ENCODE measurements at regions of chr3 and their contacts with region 1.

Region 1: DNA sequence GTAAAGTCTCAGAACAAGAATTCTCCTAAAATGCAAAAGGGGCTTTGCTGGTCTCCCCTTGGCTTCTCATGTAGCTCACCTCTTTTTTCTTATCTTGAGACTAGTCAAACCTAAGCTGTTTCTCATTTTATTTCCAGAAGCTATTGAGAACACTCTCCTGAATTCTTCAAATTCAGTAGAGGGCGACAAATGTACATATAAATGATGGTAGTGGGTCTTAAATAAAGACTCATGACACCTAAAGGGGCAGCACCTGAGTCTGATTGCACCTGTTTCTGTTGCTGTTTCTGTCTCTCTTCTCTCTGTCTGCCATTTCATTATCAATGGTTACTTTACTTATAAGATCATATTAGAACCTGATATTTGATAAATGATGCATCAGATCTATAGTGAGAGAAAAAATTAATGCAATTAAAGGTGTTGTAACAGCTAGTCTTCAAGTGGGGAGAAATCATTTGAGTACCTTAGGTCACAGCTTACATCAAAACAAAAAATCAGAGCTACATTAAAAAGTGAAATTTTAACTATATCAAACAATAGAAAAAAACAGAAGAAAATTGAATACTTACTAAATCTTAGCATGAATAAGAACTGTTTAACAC is 7.0 kb downstream of the ADIPOQ start:
- DNase-seq: peak; percentile 32
- ATAC-seq: peak; percentile 95
- H3K4me3 Mint-ChIP-seq: no peak overlapping the region
- H3K27ac Mint-ChIP-seq: no peak overlapping the region
- H3K4me1 Mint-ChIP-seq: peaks cover 8% of the 10 kb centered on the region
- H3K27me3 Mint-ChIP-seq: peaks cover 9% of the 10 kb centered on the region
- CTCF ChIP-seq: peak; percentile 47

Region 2: GRCh38 chr3:186442162-186442561 is 407.3 kb before region 1 on chr3:
- CTCF ChIA-PET with region 1: no interaction called
- POLR2A ChIA-PET with region 1: no interaction called
- intact Hi-C with region 1: no loop called
- DNase-seq: no peak
- ATAC-seq: no peak
- H3K4me3 Mint-ChIP-seq: no peak overlapping the region
- H3K27ac Mint-ChIP-seq: no peak overlapping the region
- H3K4me1 Mint-ChIP-seq: no peaks in the 10 kb centered on the region
- H3K27me3 Mint-ChIP-seq: peaks cover 3% of the 10 kb centered on the region
- CTCF ChIP-seq: no peak

Region 3: DNA sequence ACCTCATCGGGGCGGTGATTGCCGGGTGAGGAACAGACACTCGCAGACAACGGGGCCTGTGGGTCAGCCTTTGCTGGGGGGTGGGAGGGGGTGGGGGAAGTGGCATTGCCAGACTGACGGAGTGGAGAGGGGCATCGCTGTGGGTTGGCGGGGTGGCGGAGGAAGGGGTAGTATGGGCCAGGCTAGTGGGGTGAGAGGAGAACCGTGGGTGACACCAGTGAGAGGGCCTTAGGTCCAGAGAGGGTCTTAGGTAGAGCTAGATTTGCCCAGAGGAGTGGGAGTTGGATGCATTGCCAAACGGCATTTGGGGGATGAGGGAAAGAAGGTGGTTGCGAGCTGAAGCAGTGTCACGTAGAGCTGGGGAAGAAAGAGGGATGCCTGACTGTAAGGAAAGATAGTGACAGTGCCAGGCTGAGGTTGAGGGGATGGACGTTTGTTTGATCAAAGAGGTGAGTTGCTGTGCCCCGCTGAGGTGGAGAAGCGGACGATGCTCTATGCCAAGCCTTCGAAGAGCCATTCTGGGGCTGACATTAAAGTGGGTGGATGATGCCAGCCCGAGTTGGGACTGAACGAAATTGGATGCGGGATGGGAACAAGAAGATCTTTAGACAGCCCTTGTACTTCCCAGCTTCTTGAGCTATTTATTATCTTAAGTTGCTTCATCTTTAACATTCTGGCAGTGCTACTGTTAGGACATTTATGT is 278.4 kb before region 1 on chr3:
- CTCF ChIA-PET with region 1: no interaction called
- POLR2A ChIA-PET with region 1: no interaction called
- intact Hi-C with region 1: no loop called
- DNase-seq: peak; percentile 7
- ATAC-seq: no peak
- H3K4me3 Mint-ChIP-seq: peak overlapping the region; percentile 93
- H3K27ac Mint-ChIP-seq: peak overlapping the region; percentile 95
- H3K4me1 Mint-ChIP-seq: peaks cover 49% of the 10 kb centered on the region
- H3K27me3 Mint-ChIP-seq: no peaks in the 10 kb centered on the region
- CTCF ChIP-seq: no peak

Region 4: GRCh38 chr3:186882881-186883685 is 33.6 kb after region 1 on chr3:
- CTCF ChIA-PET with region 1: interaction called, 15 read pairs
- POLR2A ChIA-PET with region 1: interaction called, 4 read pairs
- intact Hi-C with region 1: no loop called
- DNase-seq: peak; percentile 69
- ATAC-seq: peak; percentile 95
- H3K4me3 Mint-ChIP-seq: peak overlapping the region; percentile 38
- H3K27ac Mint-ChIP-seq: peak overlapping the region; percentile 88
- H3K4me1 Mint-ChIP-seq: peaks cover 48% of the 10 kb centered on the region
- H3K27me3 Mint-ChIP-seq: no peaks in the 10 kb centered on the region
- CTCF ChIP-seq: no peak

Region 5: DNA sequence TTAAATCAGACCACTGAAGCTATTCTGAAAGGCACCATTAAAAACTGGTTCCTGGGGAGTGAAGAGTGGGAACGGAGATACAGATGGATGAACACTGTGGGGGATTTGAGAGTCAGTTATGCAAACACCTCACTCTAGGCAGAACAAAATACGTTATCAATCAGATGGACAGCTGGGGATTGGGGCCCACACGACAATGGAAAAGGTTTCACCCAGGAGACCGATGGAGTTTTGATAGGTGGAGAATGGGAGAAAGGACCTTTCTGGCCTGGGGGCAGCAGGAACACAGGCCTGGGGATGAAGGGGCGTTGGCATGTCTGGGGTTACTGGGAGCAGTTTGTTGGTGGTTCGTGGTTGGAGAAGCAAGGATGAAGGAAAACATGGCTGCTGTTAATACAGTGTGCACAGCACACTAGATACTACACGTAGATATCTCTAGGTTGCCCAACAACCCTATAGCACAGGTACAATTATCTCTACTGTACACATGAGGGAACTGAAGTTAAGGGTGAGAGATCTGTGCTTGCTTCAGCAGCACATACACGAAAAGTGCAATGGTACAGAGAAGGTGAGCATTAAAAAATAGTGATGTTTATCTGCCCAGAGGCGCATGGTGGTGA is 97.4 kb after region 1 on chr3:
- CTCF ChIA-PET with region 1: interaction called, 10 read pairs
- POLR2A ChIA-PET with region 1: no interaction called
- intact Hi-C with region 1: no loop called
- DNase-seq: no peak
- ATAC-seq: no peak
- H3K4me3 Mint-ChIP-seq: no peak overlapping the region
- H3K27ac Mint-ChIP-seq: no peak overlapping the region
- H3K4me1 Mint-ChIP-seq: peaks cover 37% of the 10 kb centered on the region
- H3K27me3 Mint-ChIP-seq: no peaks in the 10 kb centered on the region
- CTCF ChIP-seq: no peak

Region 6: DNA sequence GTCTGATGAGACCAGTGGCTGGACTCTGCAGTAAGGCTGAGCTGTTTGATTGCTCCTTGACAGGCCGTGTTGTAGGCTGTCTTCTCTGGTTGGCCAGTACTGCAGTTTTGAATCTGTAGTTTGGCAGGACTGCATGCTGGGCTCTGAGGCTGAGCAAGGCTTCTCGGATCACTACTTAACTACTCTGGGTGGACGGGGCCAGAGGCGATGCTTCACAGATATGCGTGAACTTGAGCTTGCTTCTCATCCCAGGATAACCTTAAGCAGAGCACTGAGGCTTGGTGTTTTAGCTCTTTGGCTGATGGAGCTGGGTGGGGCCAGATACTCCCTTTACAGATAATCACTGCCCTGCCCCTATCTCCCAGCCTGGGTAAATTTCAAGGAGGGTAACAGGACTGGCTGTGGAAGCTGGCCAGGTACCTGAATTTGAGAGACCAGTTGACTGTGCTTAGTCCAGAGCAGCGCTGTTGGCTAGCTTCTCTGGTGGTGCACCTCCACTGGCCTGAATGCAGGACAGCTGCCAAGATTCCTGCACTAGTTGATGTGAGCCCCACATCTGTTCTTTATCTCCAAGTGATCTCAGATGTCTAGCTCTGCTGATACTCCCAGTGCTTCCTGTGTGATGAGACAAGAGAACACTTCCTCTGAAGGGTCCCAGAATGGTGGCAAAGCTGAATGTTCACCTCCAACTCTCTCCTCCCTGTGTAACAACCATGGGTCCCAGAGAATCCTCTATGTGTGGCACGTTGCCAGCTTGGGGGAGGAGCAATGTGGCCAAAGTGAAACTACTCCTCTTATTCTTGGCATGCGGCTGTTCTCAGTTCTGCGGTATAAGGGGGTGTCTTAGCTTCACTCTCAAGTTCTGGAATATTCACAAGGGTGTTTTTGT is 252.0 kb after region 1 on chr3:
- CTCF ChIA-PET with region 1: interaction called, 14 read pairs
- POLR2A ChIA-PET with region 1: no interaction called
- intact Hi-C with region 1: no loop called
- DNase-seq: peak; percentile 66
- ATAC-seq: peak; percentile 73
- H3K4me3 Mint-ChIP-seq: no peak overlapping the region
- H3K27ac Mint-ChIP-seq: peak overlapping the region; percentile 26
- H3K4me1 Mint-ChIP-seq: peaks cover 29% of the 10 kb centered on the region
- H3K27me3 Mint-ChIP-seq: no peaks in the 10 kb centered on the region
- CTCF ChIP-seq: no peak

Region 7: GRCh38 chr3:187164885-187165543 is 315.5 kb after region 1 on chr3:
- CTCF ChIA-PET with region 1: interaction called, 42 read pairs
- POLR2A ChIA-PET with region 1: interaction called, 5 read pairs
- intact Hi-C with region 1: loop called (anchors 2 kb)
- DNase-seq: peak; percentile 52
- ATAC-seq: peak; percentile 80
- H3K4me3 Mint-ChIP-seq: no peak overlapping the region
- H3K27ac Mint-ChIP-seq: no peak overlapping the region
- H3K4me1 Mint-ChIP-seq: peaks cover under 1% of the 10 kb centered on the region
- H3K27me3 Mint-ChIP-seq: no peaks in the 10 kb centered on the region
- CTCF ChIP-seq: peak; percentile 88